ENCODE measurements at regions of chr3 and their contacts with region 1.

Region 1: GRCh38 chr3:50100956-50101845 is 12.5 kb downstream of the RBM5 start:
- DNase-seq: no peak
- ATAC-seq: peak; percentile 37
- H3K4me3 Mint-ChIP-seq: no peak overlapping the region
- H3K27ac Mint-ChIP-seq: peak overlapping the region; percentile 10
- H3K4me1 Mint-ChIP-seq: peaks cover 7% of the 10 kb centered on the region
- H3K27me3 Mint-ChIP-seq: no peaks in the 10 kb centered on the region
- CTCF ChIP-seq: no peak

Region 2: DNA sequence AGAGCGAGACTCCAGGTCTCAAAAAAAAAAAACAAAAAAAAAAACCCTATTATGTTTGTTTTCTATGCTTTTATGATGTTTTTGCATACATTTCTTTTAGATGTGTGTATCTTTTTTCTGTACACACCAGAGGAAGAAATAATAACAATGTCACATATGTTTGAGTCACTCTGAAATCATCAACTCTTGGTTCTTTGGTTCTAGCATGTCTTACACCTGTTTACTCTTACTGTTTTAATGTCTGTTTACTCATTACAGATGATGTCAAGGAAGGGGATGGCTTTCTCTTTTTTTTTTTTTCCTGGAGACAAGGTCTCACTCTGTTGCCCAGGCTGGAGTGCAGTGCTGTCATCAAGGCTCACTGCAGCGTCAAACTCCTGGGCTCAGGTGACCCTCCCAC is 713.5 kb before region 1 on chr3:
- CTCF ChIA-PET with region 1: no interaction called
- POLR2A ChIA-PET with region 1: no interaction called
- intact Hi-C with region 1: no loop called
- DNase-seq: no peak
- ATAC-seq: peak; percentile 17
- H3K4me3 Mint-ChIP-seq: no peak overlapping the region
- H3K27ac Mint-ChIP-seq: peak overlapping the region; percentile 62
- H3K4me1 Mint-ChIP-seq: peaks cover 51% of the 10 kb centered on the region
- H3K27me3 Mint-ChIP-seq: no peaks in the 10 kb centered on the region
- CTCF ChIP-seq: no peak

Region 3: GRCh38 chr3:50121416-50122032 is 20.3 kb after region 1 on chr3:
- CTCF ChIA-PET with region 1: interaction called, 11 read pairs
- POLR2A ChIA-PET with region 1: interaction called, 4 read pairs
- intact Hi-C with region 1: no loop called
- DNase-seq: peak; percentile 84
- ATAC-seq: peak; percentile 90
- H3K4me3 Mint-ChIP-seq: no peak overlapping the region
- H3K27ac Mint-ChIP-seq: no peak overlapping the region
- H3K4me1 Mint-ChIP-seq: no peaks in the 10 kb centered on the region
- H3K27me3 Mint-ChIP-seq: no peaks in the 10 kb centered on the region
- CTCF ChIP-seq: peak; percentile 92

Region 4: GRCh38 chr3:50245831-50246516 is 144.8 kb after region 1 on chr3:
- CTCF ChIA-PET with region 1: no interaction called
- POLR2A ChIA-PET with region 1: no interaction called
- intact Hi-C with region 1: no loop called
- DNase-seq: peak; percentile 99
- ATAC-seq: peak; percentile 73
- H3K4me3 Mint-ChIP-seq: peak overlapping the region; percentile 70
- H3K27ac Mint-ChIP-seq: peak overlapping the region; percentile 95
- H3K4me1 Mint-ChIP-seq: peaks cover 74% of the 10 kb centered on the region
- H3K27me3 Mint-ChIP-seq: no peaks in the 10 kb centered on the region
- CTCF ChIP-seq: peak; percentile 98

Region 5: DNA sequence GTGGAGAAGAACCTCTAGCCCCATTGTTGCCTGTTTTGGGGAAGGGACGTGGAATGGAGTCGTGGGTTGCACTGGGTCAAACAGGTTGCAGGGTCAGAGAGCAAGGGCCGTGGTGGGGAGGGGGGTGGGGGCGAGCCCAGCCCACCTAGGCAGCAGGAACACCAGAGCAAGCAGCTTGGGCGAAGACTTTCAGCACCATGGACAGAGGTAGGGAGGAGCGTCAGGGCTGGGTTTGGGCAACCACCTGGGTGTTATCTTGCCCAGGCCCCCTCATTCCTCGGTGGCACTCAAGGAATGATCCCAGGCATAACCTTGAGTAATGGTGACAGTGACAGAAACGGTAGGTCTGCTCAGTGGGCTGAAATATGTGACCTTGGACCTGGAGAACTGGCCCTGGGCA is 304.0 kb after region 1 on chr3:
- CTCF ChIA-PET with region 1: no interaction called
- POLR2A ChIA-PET with region 1: no interaction called
- intact Hi-C with region 1: no loop called
- DNase-seq: peak; percentile 41
- ATAC-seq: no peak
- H3K4me3 Mint-ChIP-seq: no peak overlapping the region
- H3K27ac Mint-ChIP-seq: no peak overlapping the region
- H3K4me1 Mint-ChIP-seq: peaks cover 2% of the 10 kb centered on the region
- H3K27me3 Mint-ChIP-seq: no peaks in the 10 kb centered on the region
- CTCF ChIP-seq: no peak

Measured in activated CD8-positive, alpha-beta T cell treated with anti-CD3 and anti-CD28 coated beads for 36 hours (primary cell).